WTC11 (cell line): ENCODE measurements at regions of chr15 and their contacts with region 1.

Region 1: GRCh38 chr15:37891766-37892368 is 42.6 kb upstream of the TMCO5A start:
- DNase-seq: no peak
- ATAC-seq: peak; percentile 90
- H3K4me3 Mint-ChIP-seq: no peak overlapping the region
- H3K27ac Mint-ChIP-seq: no peak overlapping the region
- H3K4me1 Mint-ChIP-seq: no peaks in the 10 kb centered on the region
- H3K27me3 Mint-ChIP-seq: no peaks in the 10 kb centered on the region; the same call in 1 of the 2 replicates
- CTCF ChIP-seq: peak; percentile 59

Region 2: GRCh38 chr15:37880009-37880834 is 11.6 kb before region 1 on chr15:
- CTCF ChIA-PET with region 1: interaction called, 25 read pairs
- POLR2A ChIA-PET with region 1: interaction called, 3 read pairs
- DNase-seq: no peak
- ATAC-seq: peak; percentile 85
- H3K4me3 Mint-ChIP-seq: no peak overlapping the region
- H3K27ac Mint-ChIP-seq: peak overlapping the region; percentile 7; the same call in 1 of the 2 replicates
- H3K4me1 Mint-ChIP-seq: peaks cover 7% of the 10 kb centered on the region
- H3K27me3 Mint-ChIP-seq: no peaks in the 10 kb centered on the region
- CTCF ChIP-seq: peak; percentile 61